Dorsolateral prefrontal cortex (tissue), 120 donors: ENCODE measurements at regions of chr5 and their contacts with region 1.

Region 1: GRCh38 chr5:270340-270739 is 1.1 kb upstream of the PDCD6 start:
- DNase-seq: no peak
- H3K4me3 ChIP-seq: peak overlapping the region in 23 of 59 donors; percentile 65 to 100 (median 96)
- H3K27ac ChIP-seq: peak overlapping the region in 3 of 59 donors; percentile 65 to 92 (median 89)
- H3K27me3 ChIP-seq: no peaks in the 10 kb centered on the region
- CTCF ChIP-seq: no peak

Region 2: GRCh38 chr5:217860-218456 is 52.4 kb before region 1 on chr5 and contains the starts of genes CCDC127 and SDHA:
- intact Hi-C with region 1: loop called (anchors 5 kb)
- DNase-seq: peak; percentile 79 to 94 (median 91)
- H3K4me3 ChIP-seq: peak within 1 kb of the TSS; percentile 66 to 99 (median 94)
- H3K27ac ChIP-seq: peak within 1 kb of the TSS in 58 of 59 donors; percentile 27 to 93 (median 84)
- H3K27me3 ChIP-seq: no peaks in the 10 kb centered on the region
- CTCF ChIP-seq: peak; percentile 18 to 78 (median 57)
- total RNA-seq, gene CCDC127: 6.3 to 19.1 (median 11.6) TPM
- total RNA-seq, gene SDHA: 112 to 251 (median 177) TPM